A549 (cell line): ENCODE measurements at regions of chr11 and their contacts with region 1.

Region 1: DNA sequence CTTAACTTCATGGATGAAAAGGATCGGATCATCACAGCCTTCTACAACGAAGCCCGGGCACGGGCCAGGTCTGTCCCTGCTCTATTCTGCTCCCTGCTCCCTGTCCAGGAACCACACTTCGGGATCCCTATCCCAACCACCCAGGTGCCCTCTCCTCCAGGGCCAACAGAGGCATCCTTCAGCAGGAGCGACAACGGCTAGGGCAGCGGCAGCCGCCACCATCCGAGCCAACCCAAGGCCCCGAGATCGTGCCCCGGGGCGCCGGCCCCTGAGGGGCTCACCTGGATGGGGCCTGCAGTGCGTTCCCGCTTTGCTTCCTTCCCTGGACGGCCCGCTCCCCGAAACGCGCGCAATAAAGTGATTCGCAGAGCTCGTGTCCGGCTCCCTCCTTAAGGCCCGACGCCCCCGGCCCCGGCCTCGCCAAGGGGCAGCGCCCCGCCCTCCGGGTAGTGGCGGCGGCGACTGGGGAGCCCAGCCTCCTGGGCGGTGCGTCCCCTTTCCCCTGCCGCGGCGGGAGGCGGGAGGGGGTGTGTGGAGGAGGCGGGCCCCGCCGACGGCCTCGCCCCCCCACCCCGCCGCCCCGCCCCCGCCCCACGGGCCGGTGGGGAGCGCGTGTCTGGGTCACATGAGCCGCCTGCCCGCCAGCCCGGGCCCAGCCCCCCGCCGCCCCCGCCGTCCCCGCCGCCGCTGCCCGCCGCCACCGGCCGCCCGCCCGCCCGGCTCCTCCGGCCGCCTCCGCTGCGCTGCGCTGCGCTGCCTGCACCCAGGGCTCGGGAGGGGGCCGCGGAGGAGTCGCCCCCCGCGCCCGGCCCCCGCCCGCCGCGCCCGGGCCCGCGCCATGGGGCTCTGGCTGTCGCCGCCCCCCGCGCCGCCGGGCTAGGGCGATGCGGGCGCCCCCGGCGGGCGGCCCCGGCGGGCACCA is at the start of gene VEGFB:
- DNase-seq: peak in 1 of 2 experiments; percentile 53
- ATAC-seq: peak; percentile 46 to 64
- H3K4me3 ChIP-seq: peak within 1 kb of the TSS; percentile 96
- H3K27ac ChIP-seq: peak within 1 kb of the TSS; percentile 96 to 97
- H3K4me1 ChIP-seq: peaks cover 40% of the 10 kb centered on the region
- CTCF ChIP-seq: no peak
- EP300 ChIP-seq: no peak
- POLR2A ChIP-seq: no peak
- RAD21 ChIP-seq: no peak
- polyA plus RNA-seq, gene VEGFB: 6.8 and 10.9 TPM in 2 replicates

Region 2: DNA sequence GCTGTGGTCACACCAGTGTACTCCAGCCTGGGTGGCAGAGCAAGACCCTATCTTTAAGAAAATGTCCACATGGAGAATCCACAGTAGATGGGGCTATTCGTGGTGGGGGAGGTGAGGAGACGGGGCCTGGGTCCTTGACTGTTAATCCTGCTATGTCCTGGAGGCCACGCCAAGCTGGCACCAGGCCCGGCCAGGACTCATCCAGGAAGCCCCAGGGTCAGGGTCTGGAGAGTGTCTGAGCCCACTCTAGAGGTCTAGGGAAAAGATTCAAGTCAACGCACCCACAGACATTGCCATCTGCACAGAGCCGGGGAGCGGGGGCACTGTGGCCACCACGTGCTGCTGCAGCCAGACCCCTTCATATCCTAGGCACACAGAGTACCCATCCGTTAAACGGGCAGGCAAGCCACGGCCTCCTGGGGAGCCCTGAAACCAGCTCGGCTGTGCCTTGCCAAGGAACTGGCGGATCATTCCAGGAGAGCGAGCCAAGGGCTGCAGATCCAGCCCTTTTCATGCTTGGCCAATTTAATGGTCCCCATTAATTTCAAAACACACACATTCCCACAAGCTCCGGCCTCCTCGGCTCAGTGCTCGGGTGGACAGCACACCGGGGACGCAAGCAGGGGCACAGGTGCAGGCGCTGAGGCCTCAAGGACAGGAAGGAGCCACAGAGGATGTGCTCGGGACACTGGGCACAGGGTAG is 92.9 kb before region 1 on chr11:
- CTCF ChIA-PET with region 1: no interaction called
- POLR2A ChIA-PET with region 1: no interaction called
- DNase-seq: no peak
- ATAC-seq: no peak
- H3K4me3 ChIP-seq: no peak overlapping the region
- H3K27ac ChIP-seq: no peak overlapping the region
- H3K4me1 ChIP-seq: no peaks in the 10 kb centered on the region
- CTCF ChIP-seq: no peak
- EP300 ChIP-seq: no peak
- POLR2A ChIP-seq: no peak
- RAD21 ChIP-seq: no peak

Region 3: DNA sequence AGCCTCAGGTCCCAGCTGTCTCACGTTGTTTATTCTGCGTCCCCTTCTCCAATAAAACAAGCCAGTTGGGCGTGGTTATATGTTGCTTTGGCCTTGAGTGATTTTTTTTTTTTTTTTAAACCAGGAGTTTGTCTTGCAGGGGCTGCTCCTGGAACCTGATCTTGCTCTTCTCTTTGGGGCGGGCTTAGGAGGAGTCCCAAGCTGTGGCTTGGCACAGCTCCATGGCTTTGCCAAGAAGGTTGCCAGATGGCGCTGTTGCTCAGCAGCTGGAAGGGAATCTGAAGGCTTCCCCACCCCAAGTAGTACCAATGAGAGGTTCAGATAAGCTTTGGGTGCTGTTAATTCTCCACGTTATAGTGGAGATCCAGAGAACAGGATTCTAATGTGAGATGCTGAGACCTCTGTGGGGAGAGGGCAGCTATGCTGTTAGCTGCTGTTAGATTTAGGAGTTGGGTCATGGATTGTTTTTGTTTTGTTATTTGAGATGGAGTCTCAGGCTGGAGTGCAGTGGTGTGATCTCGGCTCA is 29.6 kb before region 1 on chr11:
- CTCF ChIA-PET with region 1: interaction called, 254 read pairs
- POLR2A ChIA-PET with region 1: no interaction called
- DNase-seq: peak; percentile 89 to 94
- ATAC-seq: peak; percentile 55 to 83
- H3K4me3 ChIP-seq: no peak overlapping the region
- H3K27ac ChIP-seq: no peak overlapping the region
- H3K4me1 ChIP-seq: peaks cover 9% of the 10 kb centered on the region; the same call in 1 of the 3 replicates
- CTCF ChIP-seq: peak; percentile 77
- EP300 ChIP-seq: no peak
- POLR2A ChIP-seq: no peak
- RAD21 ChIP-seq: peak; percentile 62 to 80